ENCODE measurements at regions of chr12 and their contacts with region 1.

Region 1: DNA sequence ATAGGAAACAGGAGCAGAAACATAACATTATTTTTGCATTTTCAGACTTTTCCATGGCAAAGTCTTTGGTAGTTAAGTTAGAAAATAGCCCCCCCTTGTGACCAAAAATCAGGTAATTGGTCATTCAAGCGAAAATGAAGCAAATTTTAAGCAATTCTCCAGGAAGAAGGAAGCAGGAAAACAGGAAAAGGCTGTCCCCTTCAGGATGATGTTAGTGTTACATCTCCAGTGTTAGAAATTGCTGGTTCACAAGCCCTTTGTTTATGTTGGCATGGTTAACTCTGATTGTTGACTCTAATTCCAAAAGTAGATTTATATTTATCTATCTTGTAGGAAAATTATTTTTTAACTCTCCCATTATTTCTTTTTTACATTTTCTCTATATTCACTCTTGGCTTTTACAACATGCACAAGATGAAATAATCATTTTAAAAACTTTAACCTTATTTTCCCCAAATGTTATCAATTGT is 18.8 kb upstream of the GAS2L3 start:
- DNase-seq: peak; percentile 86
- ATAC-seq: peak; percentile 89
- H3K4me3 ChIP-seq: no peak overlapping the region
- H3K27ac ChIP-seq: no peak overlapping the region
- H3K4me1 ChIP-seq: no peaks in the 10 kb centered on the region
- H3K27me3 ChIP-seq: no peaks in the 10 kb centered on the region
- CTCF ChIP-seq: peak; percentile 83 to 99 (median 94)
- POLR2A ChIP-seq: no peak
- RAD21 ChIP-seq: peak; percentile 96

Region 2: DNA sequence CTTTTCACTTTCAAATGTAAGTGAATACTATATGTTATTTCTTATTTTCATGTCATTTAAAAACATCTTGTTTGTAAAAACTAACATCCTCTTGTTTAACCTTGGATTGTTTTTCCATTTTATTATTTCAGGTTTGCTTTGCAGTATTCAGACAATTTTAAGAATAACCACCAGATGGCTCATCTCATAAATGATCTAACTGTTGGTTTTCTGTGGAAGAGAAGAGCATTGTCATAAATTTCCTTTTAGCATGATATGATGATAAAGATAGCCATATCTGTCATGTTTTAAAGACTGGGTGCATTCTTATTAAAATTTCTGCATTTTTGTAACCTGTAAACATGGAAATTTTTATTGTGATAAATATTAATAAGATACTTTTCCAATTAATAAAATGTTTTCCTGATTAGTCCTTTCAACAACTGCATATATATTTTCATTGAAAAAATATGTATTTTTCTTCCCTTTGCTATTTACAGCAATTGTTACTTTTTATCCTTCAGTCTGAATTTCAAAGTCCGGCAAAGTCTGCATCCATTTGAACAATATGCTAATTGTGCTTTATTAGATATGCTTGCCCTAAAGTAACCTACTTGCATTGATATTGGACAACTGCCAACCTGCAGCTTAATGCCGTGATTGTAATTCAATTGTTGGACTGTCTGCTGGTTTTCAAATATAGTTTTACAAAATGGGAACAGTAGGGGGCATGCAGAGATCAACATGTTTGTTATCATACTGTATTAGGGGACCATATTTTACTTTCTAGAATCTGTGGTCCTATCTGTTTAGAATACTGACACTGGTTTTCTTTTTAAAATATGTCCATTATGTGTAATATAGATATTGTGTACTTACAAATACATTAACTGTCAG is 743.7 kb before region 1 on chr12:
- CTCF ChIA-PET with region 1: interaction called, 3 read pairs
- POLR2A ChIA-PET with region 1: no interaction called
- RAD21 ChIA-PET with region 1: no interaction called
- intact Hi-C with region 1: loop called (anchors 5 kb)
- DNase-seq: peak; percentile 15
- ATAC-seq: peak; percentile 42; the same call in 1 of the 2 replicates
- H3K4me3 ChIP-seq: no peak overlapping the region
- H3K27ac ChIP-seq: no peak overlapping the region
- H3K4me1 ChIP-seq: no peaks in the 10 kb centered on the region
- H3K27me3 ChIP-seq: peaks cover 48% of the 10 kb centered on the region
- CTCF ChIP-seq: peak in 2 of 3 experiments; percentile 26 to 29; a peak in 2 of 6 replicates
- POLR2A ChIP-seq: no peak
- RAD21 ChIP-seq: peak; percentile 42

Region 3: GRCh38 chr12:99875081-99875480 is 679.6 kb before region 1 on chr12:
- CTCF ChIA-PET with region 1: no interaction called
- POLR2A ChIA-PET with region 1: no interaction called
- RAD21 ChIA-PET with region 1: no interaction called
- intact Hi-C with region 1: no loop called
- DNase-seq: no peak
- ATAC-seq: no peak
- H3K4me3 ChIP-seq: no peak overlapping the region
- H3K27ac ChIP-seq: no peak overlapping the region
- H3K4me1 ChIP-seq: no peaks in the 10 kb centered on the region
- H3K27me3 ChIP-seq: peaks cover 35% of the 10 kb centered on the region
- CTCF ChIP-seq: no peak
- POLR2A ChIP-seq: no peak
- RAD21 ChIP-seq: no peak

Region 4: GRCh38 chr12:100234598-100235304 is 319.9 kb before region 1 on chr12:
- CTCF ChIA-PET with region 1: interaction called, 22 read pairs
- POLR2A ChIA-PET with region 1: no interaction called
- RAD21 ChIA-PET with region 1: no interaction called
- intact Hi-C with region 1: loop called (anchors 1 kb)
- DNase-seq: peak; percentile 29
- ATAC-seq: peak; percentile 82
- H3K4me3 ChIP-seq: no peak overlapping the region
- H3K27ac ChIP-seq: no peak overlapping the region
- H3K4me1 ChIP-seq: peaks cover 6 to 7% of the 10 kb centered on the region in 2 experiments; a peak in 3 of 4 replicates
- H3K27me3 ChIP-seq: no peaks in the 10 kb centered on the region
- CTCF ChIP-seq: peak; percentile 66 to 77 (median 73); a peak in 5 of 6 replicates
- POLR2A ChIP-seq: no peak
- RAD21 ChIP-seq: peak; percentile 80

Region 5: GRCh38 chr12:100348657-100349454 is 205.8 kb before region 1 on chr12:
- CTCF ChIA-PET with region 1: interaction called, 40 read pairs
- POLR2A ChIA-PET with region 1: no interaction called
- RAD21 ChIA-PET with region 1: interaction called in 1 of 2 experiments, 4 read pairs
- intact Hi-C with region 1: loop called (anchors 1 kb)
- DNase-seq: peak; percentile 33
- ATAC-seq: peak; percentile 76
- H3K4me3 ChIP-seq: no peak overlapping the region
- H3K27ac ChIP-seq: no peak overlapping the region
- H3K4me1 ChIP-seq: no peaks in the 10 kb centered on the region
- H3K27me3 ChIP-seq: peaks cover 3% of the 10 kb centered on the region; the same call in 1 of the 2 replicates
- CTCF ChIP-seq: peak; percentile 16 to 80 (median 57); a peak in 4 of 6 replicates
- POLR2A ChIP-seq: no peak
- RAD21 ChIP-seq: peak; percentile 81

Region 6: DNA sequence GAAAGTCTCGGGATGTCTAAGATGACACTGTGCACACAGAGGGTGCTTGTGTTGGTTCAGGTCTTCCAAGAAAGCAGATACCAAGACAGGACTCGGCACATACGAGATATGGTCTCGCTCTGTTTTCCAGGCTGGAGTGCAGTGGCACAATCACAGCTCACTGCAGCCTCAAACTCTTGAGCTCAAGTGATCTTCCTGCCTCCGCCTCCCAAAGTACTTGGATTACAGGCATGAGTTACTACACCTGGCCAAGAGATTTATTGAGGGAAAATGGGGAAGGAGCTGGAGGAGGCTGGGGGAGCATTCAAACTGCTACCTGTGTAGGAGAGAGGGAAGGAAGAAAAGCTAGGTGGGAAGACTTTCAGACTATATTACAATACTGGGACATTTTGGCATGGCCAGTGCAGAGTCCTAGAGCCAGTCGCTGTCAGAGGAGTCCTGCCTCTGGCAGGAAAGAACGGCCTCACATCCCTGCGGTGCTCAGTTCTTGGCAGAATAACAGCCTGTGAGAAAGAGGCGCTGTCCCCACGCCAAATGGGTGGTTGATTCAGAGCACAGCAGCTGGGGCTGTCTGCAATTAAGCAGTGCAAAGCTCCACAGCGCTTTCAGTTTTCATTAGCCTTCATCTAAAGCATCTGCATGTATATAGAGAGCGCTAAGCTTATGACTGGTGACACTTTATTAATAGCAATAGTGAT is 179.5 kb before region 1 on chr12:
- CTCF ChIA-PET with region 1: no interaction called
- POLR2A ChIA-PET with region 1: no interaction called
- RAD21 ChIA-PET with region 1: no interaction called
- intact Hi-C with region 1: no loop called
- DNase-seq: no peak
- ATAC-seq: no peak
- H3K4me3 ChIP-seq: no peak overlapping the region
- H3K27ac ChIP-seq: no peak overlapping the region
- H3K4me1 ChIP-seq: no peaks in the 10 kb centered on the region
- H3K27me3 ChIP-seq: no peaks in the 10 kb centered on the region
- CTCF ChIP-seq: no peak
- POLR2A ChIP-seq: no peak
- RAD21 ChIP-seq: no peak

Region 7: DNA sequence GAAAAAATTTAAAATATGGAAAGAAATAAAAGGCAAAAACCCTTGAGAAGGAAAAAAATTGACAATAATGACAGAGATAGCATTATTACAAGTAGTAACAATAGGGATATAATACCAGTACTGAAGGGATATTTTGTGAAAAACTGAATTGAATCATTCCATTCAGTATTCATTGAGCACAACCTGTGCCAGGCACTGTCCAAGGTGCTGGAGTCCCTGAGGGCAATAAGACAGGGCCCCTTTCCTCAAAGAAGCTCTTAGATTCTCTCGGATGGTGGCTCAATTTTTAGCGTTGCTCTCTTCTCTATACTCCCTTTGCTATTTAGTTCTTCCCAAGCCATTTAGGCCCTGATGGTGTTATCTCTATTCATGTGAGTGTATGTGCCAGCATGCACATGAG is 15.4 kb before region 1 on chr12:
- CTCF ChIA-PET with region 1: interaction called, 4 read pairs
- POLR2A ChIA-PET with region 1: no interaction called
- RAD21 ChIA-PET with region 1: no interaction called
- intact Hi-C with region 1: loop called (anchors 1 kb)
- DNase-seq: no peak
- ATAC-seq: 0 out of 2 replicates have a peak, but pooled peaks have one; percentile 34
- H3K4me3 ChIP-seq: no peak overlapping the region
- H3K27ac ChIP-seq: no peak overlapping the region
- H3K4me1 ChIP-seq: no peaks in the 10 kb centered on the region
- H3K27me3 ChIP-seq: peaks cover 20% of the 10 kb centered on the region; the same call in 1 of the 2 replicates
- CTCF ChIP-seq: no peak
- POLR2A ChIP-seq: no peak
- RAD21 ChIP-seq: no peak

Measured in HCT116 (cell line).